HAP-1 (cell line): ENCODE measurements at regions of chr10 and their contacts with region 1.

Region 1: GRCh38 chr10:11515596-11516430 is 95.6 kb downstream of the USP6NL start:
- DNase-seq: peak; percentile 50
- H3K4me3 ChIP-seq: no peak overlapping the region
- H3K4me1 ChIP-seq: no peaks in the 10 kb centered on the region
- H3K27me3 ChIP-seq: no peaks in the 10 kb centered on the region

Region 2: DNA sequence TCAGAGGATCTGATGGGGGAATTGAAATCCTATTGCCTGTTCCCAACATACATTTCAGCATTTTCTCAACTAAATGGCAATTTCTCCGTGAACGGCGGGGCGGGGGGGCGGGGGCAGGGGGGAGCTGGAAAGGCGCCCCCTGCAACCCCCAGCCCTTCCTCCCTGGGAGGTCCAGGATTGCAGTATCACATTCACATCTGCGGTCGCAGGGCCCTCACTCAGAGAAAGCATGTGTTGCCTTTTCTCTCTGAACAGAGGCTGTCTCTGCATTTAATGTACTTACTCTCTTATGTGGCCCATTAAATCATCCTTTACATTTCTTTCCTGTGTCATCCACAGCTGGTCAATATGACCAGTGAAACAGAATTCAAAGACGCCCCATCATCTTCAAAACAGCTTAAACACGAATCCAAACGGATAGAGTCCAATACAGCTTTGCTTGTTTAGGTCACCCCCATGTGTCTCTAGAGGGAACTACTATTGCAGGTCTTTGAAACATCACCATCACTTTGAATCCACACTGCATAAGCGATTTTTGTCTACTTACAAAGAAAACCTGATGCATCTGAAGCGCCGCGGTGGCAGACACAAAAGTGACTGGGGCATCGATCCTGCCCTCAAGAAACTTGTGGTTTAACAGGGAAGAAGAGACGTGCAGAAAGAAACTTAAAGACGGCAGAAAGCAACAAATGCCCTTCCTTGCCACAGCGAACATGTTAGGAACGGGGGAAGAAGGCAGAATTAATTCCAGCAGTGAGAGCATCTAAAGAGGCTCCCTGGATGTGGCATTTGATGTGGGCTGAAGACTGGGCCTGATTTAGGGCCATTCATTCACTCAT is 209.3 kb after region 1 on chr10:
- in situ Hi-C with region 1: loop called (anchors 10 kb)
- DNase-seq: peak; percentile 18 to 61
- H3K4me3 ChIP-seq: no peak overlapping the region
- H3K4me1 ChIP-seq: no peaks in the 10 kb centered on the region
- H3K27me3 ChIP-seq: no peaks in the 10 kb centered on the region

Region 3: GRCh38 chr10:11757821-11758463 is 242.1 kb after region 1 on chr10:
- in situ Hi-C with region 1: loop called (anchors 5 kb)
- DNase-seq: peak; percentile 74 to 92
- H3K4me3 ChIP-seq: no peak overlapping the region
- H3K4me1 ChIP-seq: peaks cover 12% of the 10 kb centered on the region
- H3K27me3 ChIP-seq: no peaks in the 10 kb centered on the region

Region 4: GRCh38 chr10:11901833-11902475 is 386.1 kb after region 1 on chr10:
- in situ Hi-C with region 1: no loop called
- DNase-seq: no peak
- H3K4me3 ChIP-seq: no peak overlapping the region
- H3K4me1 ChIP-seq: no peaks in the 10 kb centered on the region
- H3K27me3 ChIP-seq: no peaks in the 10 kb centered on the region